Right cardiac atrium (tissue), 5 donors: ENCODE measurements at regions of chr1 and their contacts with region 1.

Region 1: DNA sequence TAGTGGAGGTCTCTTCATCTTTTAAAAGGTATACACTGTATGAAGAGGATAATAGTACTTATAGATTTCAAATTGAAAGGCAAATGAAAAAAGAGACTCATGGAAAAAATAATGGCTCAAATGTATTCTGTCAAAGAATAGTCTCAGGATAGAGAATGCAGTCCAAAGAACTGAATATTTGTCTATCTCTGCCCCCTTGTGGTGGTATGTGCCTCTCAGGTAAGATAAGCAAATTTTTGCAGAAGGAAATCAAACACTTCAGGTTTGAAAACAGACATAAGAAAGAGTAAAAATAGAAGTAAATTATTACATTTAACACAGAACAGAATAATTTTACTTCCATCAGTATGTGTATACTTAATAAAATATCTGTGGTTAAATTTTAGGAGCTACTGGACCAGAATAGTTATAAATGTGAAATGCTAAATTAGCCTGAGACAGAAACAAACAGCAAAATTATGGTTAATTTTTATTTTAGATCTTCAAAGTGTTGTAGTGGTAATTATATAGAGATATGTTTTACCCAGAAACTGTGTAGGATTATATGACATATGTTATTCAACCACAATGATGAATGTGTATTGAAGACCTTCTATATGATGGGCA is 164.4 kb upstream of the PALMD start:
- DNase-seq: no peak
- ATAC-seq: peak; percentile 52 to 59
- H3K4me3 ChIP-seq: no peak overlapping the region
- H3K27ac ChIP-seq: no peak overlapping the region
- H3K4me1 ChIP-seq: no peaks in the 10 kb centered on the region
- H3K27me3 ChIP-seq: no peaks in the 10 kb centered on the region

Region 2: GRCh38 chr1:99018313-99018712 is 463.2 kb before region 1 on chr1:
- intact Hi-C with region 1: no loop called
- DNase-seq: no peak
- ATAC-seq: no peak
- H3K4me3 ChIP-seq: no peak overlapping the region
- H3K27ac ChIP-seq: no peak overlapping the region
- H3K4me1 ChIP-seq: no peaks in the 10 kb centered on the region
- H3K27me3 ChIP-seq: no peaks in the 10 kb centered on the region

Region 3: DNA sequence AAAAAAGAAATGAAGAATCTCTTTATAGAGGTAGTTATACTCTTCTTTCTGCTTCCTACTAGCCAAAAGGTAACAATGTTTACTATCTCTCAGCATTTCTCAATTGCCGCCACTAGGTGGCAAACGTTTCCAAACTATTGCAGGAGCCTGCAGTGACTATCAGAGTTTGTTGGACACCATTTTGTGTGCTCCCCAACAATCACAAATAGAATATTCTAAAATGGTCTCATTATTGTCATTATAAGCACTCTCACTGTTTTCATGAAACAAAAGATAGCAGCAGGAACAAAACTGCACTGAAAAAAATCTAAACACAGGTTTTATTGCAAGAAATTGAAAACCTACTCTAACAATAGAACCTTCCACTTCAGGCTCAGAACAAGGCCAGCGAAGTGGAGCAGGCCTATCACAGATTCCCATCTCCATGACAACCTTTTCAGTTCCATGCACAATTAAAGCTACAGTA is 301.1 kb before region 1 on chr1:
- intact Hi-C with region 1: loop called in 3 of 4 experiments (anchors 5 to 10 kb)
- DNase-seq: peak; percentile 32 to 83 (median 67)
- ATAC-seq: peak; percentile 92 to 95
- H3K4me3 ChIP-seq: no peak overlapping the region
- H3K27ac ChIP-seq: no peak overlapping the region
- H3K4me1 ChIP-seq: no peaks in the 10 kb centered on the region
- H3K27me3 ChIP-seq: no peaks in the 10 kb centered on the region